HepG2 (cell line): ENCODE measurements at regions of chr6 and their contacts with region 1.

Region 1: GRCh38 chr6:28586962-28587745 is 61.5 kb downstream of the GPX5 start:
- DNase-seq: peak; percentile 82
- ATAC-seq: peak; percentile 93
- H3K4me3 ChIP-seq: peak overlapping the region; percentile 74 to 86 (median 82)
- H3K27ac ChIP-seq: peak overlapping the region; percentile 62
- H3K4me1 ChIP-seq: peaks cover 50% of the 10 kb centered on the region
- H3K27me3 ChIP-seq: no peaks in the 10 kb centered on the region; a peak in 1 of 5 replicates
- CTCF ChIP-seq: peak; percentile 44; the same call in 1 of the 2 replicates
- EP300 ChIP-seq: peak in 1 of 2 experiments; percentile 35; a peak in 1 of 4 replicates
- POLR2A ChIP-seq: peak; percentile 86 to 98
- RAD21 ChIP-seq: peak; percentile 45; the same call in 1 of the 2 replicates

Region 2: GRCh38 chr6:28399350-28400121 is 187.6 kb before region 1 on chr6 and contains the start of gene ZSCAN12:
- CTCF ChIA-PET with region 1: no interaction called
- POLR2A ChIA-PET with region 1: interaction called, 9 read pairs
- in situ Hi-C with region 1: no loop called
- intact Hi-C with region 1: loop called (anchors 1 kb)
- DNase-seq: peak; percentile 86
- ATAC-seq: peak; percentile 98
- H3K4me3 ChIP-seq: peak within 1 kb of the TSS; percentile 82 to 99 (median 94)
- H3K27ac ChIP-seq: peak within 1 kb of the TSS; percentile 68
- H3K4me1 ChIP-seq: peaks cover 49% of the 10 kb centered on the region
- H3K27me3 ChIP-seq: no peaks in the 10 kb centered on the region; a peak in 1 of 5 replicates
- CTCF ChIP-seq: peak; percentile 94
- EP300 ChIP-seq: peak in 1 of 2 experiments; percentile 64; a peak in 3 of 4 replicates
- POLR2A ChIP-seq: peak; percentile 83 to 90
- RAD21 ChIP-seq: peak; percentile 67
- total RNA-seq, gene ZSCAN12: 8.9 and 9.8 TPM in 2 replicates

Region 3: DNA sequence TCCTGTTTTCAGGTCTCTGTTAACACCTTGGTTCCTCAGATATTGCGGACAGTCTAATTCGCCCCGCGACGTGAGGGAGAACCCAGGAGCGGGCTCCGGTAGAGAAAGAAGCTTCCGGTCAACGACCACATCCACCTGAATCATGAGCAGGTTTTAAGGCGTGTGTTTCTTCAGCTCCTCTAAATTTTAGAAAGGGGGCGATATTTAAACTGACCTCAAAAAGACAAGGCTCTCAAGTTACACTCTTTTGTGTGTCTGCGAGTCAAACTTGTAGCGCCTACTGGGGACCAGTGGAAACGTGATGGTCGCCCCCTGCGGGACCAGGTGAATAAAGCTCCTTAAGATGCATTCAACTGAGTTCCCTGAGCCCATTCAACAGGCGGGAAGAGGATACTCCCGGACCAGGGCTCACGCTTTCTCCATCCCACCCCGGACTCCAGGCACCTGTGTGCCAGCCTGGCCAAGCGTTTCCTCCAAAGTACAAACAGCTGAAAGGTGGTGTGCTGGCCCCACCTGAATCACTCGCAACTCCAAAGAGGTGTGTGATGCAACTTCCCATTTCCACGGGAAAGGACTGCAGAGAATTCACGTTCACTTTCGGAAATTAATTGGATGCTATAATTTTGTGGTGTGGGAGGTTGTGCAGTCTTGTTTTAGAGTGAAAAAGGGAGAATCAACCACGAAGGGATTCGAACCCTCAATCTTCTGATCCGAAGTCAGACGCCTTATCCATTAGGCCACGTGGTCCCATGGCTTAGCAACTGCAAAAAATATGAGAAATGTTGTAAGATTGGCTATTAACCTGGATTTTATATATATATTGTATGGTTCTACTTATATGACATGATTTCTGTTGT is 44.5 kb before region 1 on chr6:
- CTCF ChIA-PET with region 1: no interaction called
- POLR2A ChIA-PET with region 1: interaction called, 7 read pairs
- in situ Hi-C with region 1: no loop called
- intact Hi-C with region 1: loop called (anchors 1 kb)
- DNase-seq: peak; percentile 80
- ATAC-seq: peak; percentile 84
- H3K4me3 ChIP-seq: peak overlapping the region; percentile 53 to 76 (median 64)
- H3K27ac ChIP-seq: no peak overlapping the region
- H3K4me1 ChIP-seq: peaks cover 22% of the 10 kb centered on the region
- H3K27me3 ChIP-seq: peaks cover 0 to 3% of the 10 kb centered on the region in 2 experiments; a peak in 2 of 5 replicates
- CTCF ChIP-seq: peak; percentile 75
- EP300 ChIP-seq: no peak
- POLR2A ChIP-seq: no peak
- RAD21 ChIP-seq: peak; percentile 71

Region 4: DNA sequence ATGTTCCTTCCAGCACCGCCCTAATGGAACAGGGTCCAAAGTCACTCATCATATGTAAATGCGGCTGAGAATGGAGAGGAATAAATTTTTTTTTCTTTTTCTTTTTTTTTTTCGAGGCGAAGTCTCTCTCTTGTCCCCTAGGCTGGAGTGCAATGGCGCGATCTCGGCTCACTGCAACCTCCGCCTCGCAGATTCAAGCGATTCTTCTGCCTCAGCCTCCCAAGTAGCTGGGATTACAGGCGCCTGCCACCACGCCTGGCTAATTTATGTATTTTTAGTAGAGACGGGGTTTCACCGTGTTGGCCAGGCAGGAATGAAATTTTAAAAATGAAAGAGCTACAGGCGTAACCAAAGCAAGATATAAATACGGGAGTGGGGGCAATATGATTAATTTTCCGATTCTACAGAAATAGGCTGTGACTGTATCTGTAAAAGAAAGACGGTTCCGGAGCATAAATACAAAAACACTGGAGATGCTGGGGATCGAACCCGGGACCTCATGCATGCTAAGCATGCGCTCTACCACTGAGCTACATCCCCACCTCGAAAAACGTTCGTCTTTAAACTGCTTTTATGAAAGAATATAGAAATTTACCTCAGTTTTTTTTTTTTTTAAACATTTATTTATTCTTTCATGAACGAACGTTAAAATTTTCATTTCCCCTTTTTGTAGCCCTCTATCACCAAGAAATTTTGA is 70.8 kb after region 1 on chr6:
- CTCF ChIA-PET with region 1: no interaction called
- POLR2A ChIA-PET with region 1: no interaction called
- in situ Hi-C with region 1: no loop called
- intact Hi-C with region 1: loop called (anchors 5 kb)
- DNase-seq: peak; percentile 61
- ATAC-seq: peak; percentile 91
- H3K4me3 ChIP-seq: peak overlapping the region; percentile 59 to 72 (median 65)
- H3K27ac ChIP-seq: no peak overlapping the region
- H3K4me1 ChIP-seq: peaks cover 29% of the 10 kb centered on the region
- H3K27me3 ChIP-seq: peaks cover 1 to 16% of the 10 kb centered on the region in 2 experiments; a peak in 2 of 5 replicates
- CTCF ChIP-seq: no peak
- EP300 ChIP-seq: no peak
- POLR2A ChIP-seq: no peak
- RAD21 ChIP-seq: no peak

Region 5: GRCh38 chr6:28725890-28726348 is 138.8 kb after region 1 on chr6:
- CTCF ChIA-PET with region 1: no interaction called
- POLR2A ChIA-PET with region 1: interaction called, 3 read pairs
- in situ Hi-C with region 1: no loop called
- intact Hi-C with region 1: loop called (anchors 5 kb)
- DNase-seq: peak; percentile 25
- ATAC-seq: no peak
- H3K4me3 ChIP-seq: no peak overlapping the region
- H3K27ac ChIP-seq: no peak overlapping the region
- H3K4me1 ChIP-seq: peaks cover 49% of the 10 kb centered on the region
- H3K27me3 ChIP-seq: peaks cover 0 to 12% of the 10 kb centered on the region in 2 experiments; a peak in 2 of 5 replicates
- CTCF ChIP-seq: no peak
- EP300 ChIP-seq: no peak
- POLR2A ChIP-seq: no peak
- RAD21 ChIP-seq: no peak

Region 6: DNA sequence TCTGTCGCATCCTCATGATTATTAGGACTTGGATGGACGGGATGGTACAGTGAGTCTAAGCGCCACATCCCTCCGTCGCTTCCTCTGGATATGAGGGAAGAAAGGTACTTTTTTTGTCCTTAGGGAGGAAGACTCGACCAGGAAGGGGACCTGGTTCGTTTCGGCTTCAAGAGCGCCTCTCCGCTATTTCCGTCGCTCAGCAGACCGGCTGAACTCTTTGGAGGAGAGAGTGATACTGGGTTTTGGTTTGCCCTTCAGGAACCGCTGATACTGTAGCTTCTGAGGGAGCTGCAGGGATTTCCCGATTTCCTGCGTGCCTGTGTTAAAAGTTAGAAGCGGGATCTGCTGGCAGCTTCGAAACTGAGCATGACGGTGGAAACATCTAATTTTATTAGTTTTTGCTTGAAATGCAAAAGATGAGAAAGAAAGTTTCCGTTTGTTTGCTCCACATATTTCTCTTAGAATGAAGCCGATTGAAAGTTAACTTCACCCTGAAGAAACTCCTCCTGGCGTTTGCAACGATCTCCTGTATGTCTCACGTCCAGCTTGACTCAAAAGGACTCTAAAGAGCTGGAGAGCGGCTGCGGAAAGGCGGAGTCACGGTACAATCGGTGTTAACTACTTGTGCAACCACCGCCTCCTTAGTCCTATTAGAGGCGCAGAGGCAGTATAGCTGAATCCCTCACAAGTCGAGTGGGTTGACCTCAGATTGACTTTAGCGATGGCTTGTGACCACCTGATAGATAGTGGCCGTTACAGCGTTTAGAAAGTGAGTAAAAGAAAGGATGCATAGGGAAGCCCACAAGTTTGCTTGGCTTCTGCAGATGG is 207.2 kb after region 1 on chr6:
- CTCF ChIA-PET with region 1: no interaction called
- POLR2A ChIA-PET with region 1: no interaction called
- in situ Hi-C with region 1: no loop called
- intact Hi-C with region 1: no loop called
- DNase-seq: peak; percentile 29
- ATAC-seq: peak; percentile 47
- H3K4me3 ChIP-seq: peak overlapping the region; percentile 42 to 62 (median 57)
- H3K27ac ChIP-seq: no peak overlapping the region
- H3K4me1 ChIP-seq: peaks cover 65% of the 10 kb centered on the region
- H3K27me3 ChIP-seq: no peaks in the 10 kb centered on the region; a peak in 3 of 5 replicates
- CTCF ChIP-seq: no peak
- EP300 ChIP-seq: no peak
- POLR2A ChIP-seq: no peak
- RAD21 ChIP-seq: no peak

Region 7: GRCh38 chr6:29129326-29130012 is 542.3 kb after region 1 on chr6:
- CTCF ChIA-PET with region 1: no interaction called
- POLR2A ChIA-PET with region 1: no interaction called
- in situ Hi-C with region 1: no loop called
- intact Hi-C with region 1: no loop called
- DNase-seq: no peak
- ATAC-seq: peak; percentile 52
- H3K4me3 ChIP-seq: no peak overlapping the region
- H3K27ac ChIP-seq: no peak overlapping the region
- H3K4me1 ChIP-seq: no peaks in the 10 kb centered on the region
- H3K27me3 ChIP-seq: peaks cover 0 to 14% of the 10 kb centered on the region in 2 experiments; a peak in 1 of 5 replicates
- CTCF ChIP-seq: no peak
- EP300 ChIP-seq: no peak
- POLR2A ChIP-seq: no peak
- RAD21 ChIP-seq: no peak